ENCODE measurements at regions of chr19 and their contacts with region 1.

Region 1: GRCh38 chr19:17775245-17775916 is 19.6 kb upstream of the B3GNT3 start:
- DNase-seq: peak; percentile 64 to 85 (median 76)
- ATAC-seq: peak; percentile 42
- H3K4me3 ChIP-seq: no peak overlapping the region
- H3K27ac ChIP-seq: no peak overlapping the region; the same call in 2 of the 3 replicates
- H3K4me1 ChIP-seq: peaks cover 12 to 37% of the 10 kb centered on the region in 2 experiments
- H3K27me3 ChIP-seq: no peaks in the 10 kb centered on the region
- CTCF ChIP-seq: peak; percentile 92 to 96 (median 94)
- EP300 ChIP-seq: no peak
- POLR2A ChIP-seq: no peak
- RAD21 ChIP-seq: peak; percentile 83 to 89

Region 2: DNA sequence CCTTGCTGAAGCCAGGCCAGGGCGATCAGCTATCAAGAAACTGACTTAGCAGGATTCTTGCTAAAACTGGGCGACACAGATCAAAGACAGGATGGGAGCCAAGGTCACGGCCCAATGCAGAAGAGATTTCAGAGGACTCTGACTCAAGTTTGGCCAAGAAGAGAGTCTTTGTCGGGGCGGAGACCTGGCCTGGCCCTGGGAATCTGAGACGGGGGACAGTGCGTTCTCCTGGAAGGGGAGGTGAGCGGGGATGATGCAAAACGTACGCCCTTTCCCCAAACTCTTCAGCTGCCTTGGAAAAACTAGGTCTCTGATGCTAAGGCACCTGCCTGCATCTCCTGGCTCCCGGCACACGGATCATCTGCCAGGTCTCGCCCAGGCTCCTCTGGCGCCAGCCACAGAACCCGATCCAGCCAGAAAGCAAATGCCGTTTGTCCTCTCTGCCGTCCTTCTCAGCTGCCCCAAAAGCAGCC is 345.7 kb before region 1 on chr19:
- CTCF ChIA-PET with region 1: no interaction called
- POLR2A ChIA-PET with region 1: no interaction called
- in situ Hi-C with region 1: no loop called
- intact Hi-C with region 1: no loop called
- DNase-seq: peak in 1 of 4 experiments; percentile 16
- ATAC-seq: no peak
- H3K4me3 ChIP-seq: no peak overlapping the region
- H3K27ac ChIP-seq: no peak overlapping the region
- H3K4me1 ChIP-seq: peaks cover 3 to 12% of the 10 kb centered on the region in 2 experiments; a peak in 3 of 5 replicates
- H3K27me3 ChIP-seq: no peaks in the 10 kb centered on the region
- CTCF ChIP-seq: no peak
- EP300 ChIP-seq: no peak
- POLR2A ChIP-seq: no peak
- RAD21 ChIP-seq: no peak

Region 3: DNA sequence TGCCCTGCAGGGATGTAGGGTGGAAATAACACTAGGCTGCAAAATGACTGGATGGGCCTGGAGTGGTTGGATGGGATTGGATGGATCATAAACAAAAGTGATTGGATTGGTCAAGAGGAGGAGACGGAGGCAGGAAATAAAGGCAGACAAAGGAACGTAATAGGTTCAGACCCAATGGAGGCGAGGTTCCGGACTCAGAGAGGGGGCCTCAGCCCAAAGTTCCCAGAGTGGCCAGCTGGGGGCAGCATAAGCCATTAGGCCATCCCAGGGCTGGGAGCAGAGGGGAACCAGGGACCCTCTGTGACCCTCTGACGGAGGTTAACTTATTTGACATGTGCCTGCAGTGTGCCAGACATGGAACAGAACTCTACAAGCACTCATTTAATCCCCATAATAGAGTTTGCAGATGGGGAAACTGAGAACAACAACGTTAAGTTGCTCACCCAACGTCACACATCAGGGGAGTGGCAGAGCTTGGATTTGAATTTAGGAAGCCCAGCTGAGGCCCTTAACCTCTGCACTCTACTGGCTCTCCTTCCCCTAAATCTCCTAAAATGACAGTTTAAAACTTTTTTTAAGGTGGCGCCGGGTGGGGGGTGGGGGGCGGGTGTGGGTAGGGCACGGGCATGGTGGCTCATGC is 71.4 kb before region 1 on chr19:
- CTCF ChIA-PET with region 1: interaction called, 33 read pairs
- POLR2A ChIA-PET with region 1: interaction called, 3 read pairs
- in situ Hi-C with region 1: no loop called
- intact Hi-C with region 1: loop called (anchors 2 kb)
- DNase-seq: peak; percentile 66 to 74 (median 68)
- ATAC-seq: peak; percentile 90
- H3K4me3 ChIP-seq: no peak overlapping the region
- H3K27ac ChIP-seq: no peak overlapping the region
- H3K4me1 ChIP-seq: peaks cover 0 to 4% of the 10 kb centered on the region in 2 experiments; a peak in 2 of 5 replicates
- H3K27me3 ChIP-seq: peaks cover 5 to 16% of the 10 kb centered on the region in 2 experiments
- CTCF ChIP-seq: peak; percentile 86 to 95 (median 87)
- EP300 ChIP-seq: no peak
- POLR2A ChIP-seq: no peak
- RAD21 ChIP-seq: peak; percentile 84 to 94

Region 4: DNA sequence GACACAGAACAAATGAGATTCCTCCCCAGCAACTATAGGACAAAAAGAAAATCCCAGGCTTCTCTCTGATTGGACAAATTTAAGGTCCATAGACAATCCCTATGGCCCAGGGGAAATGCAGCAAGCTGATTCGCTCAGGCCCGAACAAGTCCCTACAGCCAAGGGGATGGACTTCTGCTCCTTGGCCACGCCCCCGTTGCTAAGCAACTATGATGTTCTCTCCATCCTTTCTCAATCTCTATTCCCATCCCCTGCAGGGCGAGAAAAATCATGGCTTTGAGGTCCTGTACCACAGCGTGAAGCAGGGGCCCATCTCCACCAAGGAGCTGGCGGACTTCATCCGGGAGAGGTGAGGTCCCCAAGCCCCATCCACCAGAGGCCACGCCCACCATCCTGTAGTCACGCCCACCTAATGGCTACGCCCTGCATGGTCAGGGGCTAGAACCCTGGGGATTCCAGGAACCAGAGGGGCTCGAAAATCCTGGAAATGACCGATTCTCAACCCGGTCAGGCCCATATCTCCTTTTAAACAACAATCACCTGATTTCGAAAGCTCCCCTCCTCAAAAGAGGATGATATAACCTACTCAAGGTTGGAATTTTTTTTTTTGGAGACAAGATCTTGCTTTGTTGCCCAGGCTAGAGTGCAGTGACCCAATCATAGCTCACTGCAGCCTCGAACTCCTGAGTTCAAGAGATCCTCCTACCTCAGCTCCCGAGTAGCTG is 12.7 kb before region 1 on chr19:
- CTCF ChIA-PET with region 1: no interaction called
- POLR2A ChIA-PET with region 1: interaction called, 12 read pairs
- in situ Hi-C with region 1: no loop called
- intact Hi-C with region 1: no loop called
- DNase-seq: peak; percentile 83 to 90 (median 86)
- ATAC-seq: peak; percentile 97
- H3K4me3 ChIP-seq: no peak overlapping the region
- H3K27ac ChIP-seq: no peak overlapping the region
- H3K4me1 ChIP-seq: peaks cover 0 to 5% of the 10 kb centered on the region in 2 experiments; a peak in 3 of 5 replicates
- H3K27me3 ChIP-seq: no peaks in the 10 kb centered on the region
- CTCF ChIP-seq: no peak
- EP300 ChIP-seq: no peak
- POLR2A ChIP-seq: no peak
- RAD21 ChIP-seq: no peak

Region 5: DNA sequence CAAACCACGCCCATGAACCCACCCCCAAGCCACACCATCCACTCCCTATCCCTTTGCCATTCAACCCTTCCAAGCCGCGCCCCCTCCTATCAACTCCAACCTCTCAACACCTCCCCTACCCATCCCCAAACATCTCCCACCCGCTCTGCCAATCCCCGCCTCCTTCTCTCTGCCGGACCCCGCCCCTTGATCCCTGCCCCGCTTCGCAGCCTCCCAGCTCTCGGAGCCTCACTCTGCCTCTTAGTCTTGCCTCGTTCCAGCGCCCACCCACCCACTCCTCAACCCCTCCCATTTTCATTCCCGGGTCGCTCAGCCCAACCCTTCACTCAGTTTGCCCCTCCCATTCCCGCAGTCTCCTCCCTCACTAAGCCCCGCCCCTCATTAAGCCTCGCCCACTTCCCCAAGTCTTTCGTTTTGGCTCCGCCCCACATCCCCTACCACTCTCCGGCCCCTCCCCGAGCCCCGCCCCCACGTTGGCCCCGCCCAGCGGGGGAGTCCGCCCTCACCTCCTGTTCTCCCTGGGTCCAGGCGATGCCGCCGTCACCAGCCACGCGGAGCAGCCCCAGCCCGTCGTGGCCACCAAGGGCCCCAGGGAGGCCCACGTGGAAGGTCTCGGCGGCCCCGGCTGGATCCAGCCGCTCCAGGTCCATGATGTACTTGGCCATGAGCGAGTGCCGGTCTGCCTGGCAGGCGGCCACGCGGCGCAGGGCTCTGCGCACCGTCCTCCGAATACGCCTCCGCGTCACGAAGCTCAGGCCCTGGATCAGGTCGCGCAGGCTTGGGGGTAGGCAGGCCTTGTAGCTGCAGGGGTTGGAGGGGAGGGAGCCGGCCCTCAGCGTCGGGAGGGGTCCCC is 66.7 kb after region 1 on chr19:
- CTCF ChIA-PET with region 1: no interaction called
- POLR2A ChIA-PET with region 1: no interaction called
- in situ Hi-C with region 1: no loop called
- intact Hi-C with region 1: loop called (anchors 1 kb)
- DNase-seq: peak; percentile 95 to 100 (median 99)
- ATAC-seq: peak; percentile 94
- H3K4me3 ChIP-seq: peak overlapping the region; percentile 58
- H3K27ac ChIP-seq: peak overlapping the region; percentile 77
- H3K4me1 ChIP-seq: peaks cover 0 to 37% of the 10 kb centered on the region in 2 experiments; a peak in 3 of 5 replicates
- H3K27me3 ChIP-seq: peaks cover 3 to 15% of the 10 kb centered on the region in 2 experiments; a peak in 2 of 5 replicates
- CTCF ChIP-seq: no peak
- EP300 ChIP-seq: no peak
- POLR2A ChIP-seq: peak; percentile 85
- RAD21 ChIP-seq: no peak

Region 6: DNA sequence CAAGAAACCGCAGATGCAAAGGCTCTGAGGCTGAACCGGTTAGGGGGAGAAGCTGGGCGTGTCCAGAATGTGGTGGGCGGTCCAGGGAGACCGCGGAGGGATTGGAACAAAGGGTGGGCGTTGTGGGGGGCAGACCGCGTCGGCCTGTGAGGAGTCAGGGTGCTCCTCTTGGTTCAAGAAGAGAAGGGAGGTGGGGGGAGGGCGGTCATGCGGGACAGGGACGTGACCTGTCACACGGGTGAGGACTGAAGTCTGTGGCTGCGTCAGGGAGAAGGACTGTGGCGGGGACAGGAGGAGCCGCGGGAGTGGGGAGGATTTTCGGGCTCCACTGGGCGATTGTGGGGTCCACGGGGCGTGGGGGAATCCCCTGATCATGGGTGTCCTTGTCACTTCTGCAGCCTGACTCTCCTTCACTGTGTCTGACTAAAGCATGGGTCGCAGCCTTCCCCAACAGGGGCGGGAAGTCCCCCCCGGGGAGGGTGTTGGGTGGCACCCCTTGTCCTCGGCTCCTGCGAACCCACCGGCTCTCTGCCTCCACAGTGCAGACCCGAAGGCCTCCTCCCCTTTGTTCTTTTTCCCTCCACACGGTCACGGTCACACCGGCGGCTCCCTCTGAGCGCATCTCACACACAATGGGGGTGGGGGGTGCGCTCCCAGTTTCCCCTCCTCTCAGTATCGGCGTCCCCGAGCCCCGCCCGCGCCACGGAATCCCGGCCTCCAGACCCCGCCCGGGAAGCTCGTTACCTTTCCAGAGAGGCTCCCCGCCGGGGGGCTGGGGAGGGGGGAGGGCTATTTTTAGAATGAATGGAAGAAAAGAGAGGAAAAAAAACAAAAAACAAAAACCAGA is 175.2 kb after region 1 on chr19:
- CTCF ChIA-PET with region 1: no interaction called
- POLR2A ChIA-PET with region 1: no interaction called
- in situ Hi-C with region 1: no loop called
- intact Hi-C with region 1: no loop called
- DNase-seq: peak; percentile 29 to 55 (median 46)
- ATAC-seq: no peak
- H3K4me3 ChIP-seq: peak overlapping the region; percentile 8; the same call in 1 of the 2 replicates
- H3K27ac ChIP-seq: no peak overlapping the region
- H3K4me1 ChIP-seq: peaks cover 61 to 84% of the 10 kb centered on the region in 2 experiments
- H3K27me3 ChIP-seq: no peaks in the 10 kb centered on the region
- CTCF ChIP-seq: no peak
- EP300 ChIP-seq: no peak
- POLR2A ChIP-seq: no peak
- RAD21 ChIP-seq: no peak